Activated CD8-positive, alpha-beta T cell treated with anti-CD3 and anti-CD28 coated beads, Interleukin-2, amount 10 ng/mL, durations not matched to agents 7 days and 5 days (primary cell): ENCODE measurements at regions of chr12 and their contacts with region 1.

Region 1: GRCh38 chr12:21657326-21658077 is at the start of gene LDHB:
- DNase-seq: peak; percentile 98
- ATAC-seq: peak; percentile 97
- H3K4me3 Mint-ChIP-seq: peak within 1 kb of the TSS; percentile 99
- H3K27ac Mint-ChIP-seq: peak within 1 kb of the TSS; percentile 100
- H3K4me1 Mint-ChIP-seq: peaks cover 34% of the 10 kb centered on the region
- H3K27me3 Mint-ChIP-seq: no peaks in the 10 kb centered on the region
- total RNA-seq, gene LDHB: 1,063 to 1,149 TPM

Region 2: GRCh38 chr12:21542403-21542802 is 115.1 kb before region 1 on chr12:
- CTCF ChIA-PET with region 1: no interaction called
- POLR2A ChIA-PET with region 1: no interaction called
- DNase-seq: no peak
- ATAC-seq: no peak
- H3K4me3 Mint-ChIP-seq: no peak overlapping the region
- H3K27ac Mint-ChIP-seq: no peak overlapping the region
- H3K4me1 Mint-ChIP-seq: no peaks in the 10 kb centered on the region
- H3K27me3 Mint-ChIP-seq: peaks cover 2% of the 10 kb centered on the region

Region 3: GRCh38 chr12:21642707-21643389 is 14.7 kb before region 1 on chr12:
- CTCF ChIA-PET with region 1: interaction called, 11 read pairs
- POLR2A ChIA-PET with region 1: interaction called, 25 read pairs
- DNase-seq: no peak
- ATAC-seq: no peak
- H3K4me3 Mint-ChIP-seq: no peak overlapping the region
- H3K27ac Mint-ChIP-seq: no peak overlapping the region
- H3K4me1 Mint-ChIP-seq: peaks cover 59% of the 10 kb centered on the region
- H3K27me3 Mint-ChIP-seq: no peaks in the 10 kb centered on the region

Region 4: DNA sequence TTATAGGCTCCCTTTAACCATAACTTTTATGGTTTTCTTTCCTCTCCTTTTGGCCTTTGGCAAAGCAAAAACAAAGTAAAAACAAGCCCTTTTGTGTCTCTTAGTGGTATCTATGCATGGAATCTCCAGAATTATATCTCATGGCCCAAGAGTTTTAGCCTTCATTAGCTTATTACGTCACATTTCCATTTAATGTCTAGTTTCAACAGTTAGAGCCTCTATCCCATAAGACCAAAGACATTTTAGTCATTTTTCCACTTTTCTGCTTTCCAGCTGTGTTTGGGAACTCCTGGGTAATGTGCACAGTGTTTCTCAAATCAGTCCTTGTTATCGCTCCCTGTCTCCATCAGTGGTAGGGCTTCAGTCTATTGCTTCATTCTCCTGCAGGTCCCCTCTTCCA is 12.8 kb after region 1 on chr12:
- CTCF ChIA-PET with region 1: interaction called, 3 read pairs
- POLR2A ChIA-PET with region 1: interaction called, 10 read pairs
- DNase-seq: no peak
- ATAC-seq: no peak
- H3K4me3 Mint-ChIP-seq: no peak overlapping the region
- H3K27ac Mint-ChIP-seq: no peak overlapping the region
- H3K4me1 Mint-ChIP-seq: no peaks in the 10 kb centered on the region
- H3K27me3 Mint-ChIP-seq: peaks cover 4% of the 10 kb centered on the region

Region 5: DNA sequence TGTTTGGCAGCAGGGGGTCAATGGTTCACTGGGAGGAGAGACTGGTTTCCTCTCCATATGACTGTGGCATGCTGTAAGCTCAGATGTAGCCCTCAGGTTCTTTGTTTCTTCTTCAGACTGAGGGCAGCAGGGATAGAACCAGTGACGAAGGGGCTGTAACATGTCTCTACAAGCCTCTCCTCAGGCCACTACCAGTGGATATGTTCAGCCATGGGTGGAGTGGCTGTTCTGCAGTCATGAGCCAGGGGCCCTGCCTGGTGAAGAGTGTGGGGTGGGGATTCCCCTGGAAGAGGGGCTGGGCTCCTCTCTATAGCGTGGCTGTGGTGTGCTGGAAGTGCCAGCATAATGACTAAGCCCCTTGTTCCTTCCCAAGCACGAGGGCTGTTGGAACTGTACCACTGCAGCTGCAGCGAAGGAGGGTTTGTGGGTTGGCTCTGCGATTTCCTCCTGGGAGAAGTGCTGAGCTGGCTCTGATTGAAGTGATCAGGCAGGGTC is 444.3 kb after region 1 on chr12:
- CTCF ChIA-PET with region 1: no interaction called
- POLR2A ChIA-PET with region 1: no interaction called
- DNase-seq: no peak
- ATAC-seq: no peak
- H3K4me3 Mint-ChIP-seq: no peak overlapping the region
- H3K27ac Mint-ChIP-seq: no peak overlapping the region
- H3K4me1 Mint-ChIP-seq: peaks cover 13% of the 10 kb centered on the region
- H3K27me3 Mint-ChIP-seq: peaks cover 7% of the 10 kb centered on the region